ENCODE measurements at regions of chr17 and their contacts with region 1.

Region 1: GRCh38 chr17:73569762-73570319 is 74.4 kb downstream of the SDK2 start:
- DNase-seq: peak in 1 of 5 donors; percentile 54
- ATAC-seq: no peak
- H3K4me3 ChIP-seq: no peak overlapping the region
- H3K27ac ChIP-seq: no peak overlapping the region
- H3K4me1 ChIP-seq: peaks cover 0 to 8% (median 0%) of the 10 kb centered on the region in 12 donors
- H3K27me3 ChIP-seq: no peaks in the 10 kb centered on the region
- CTCF ChIP-seq: no peak
- POLR2A ChIP-seq: no peak

Region 2: DNA sequence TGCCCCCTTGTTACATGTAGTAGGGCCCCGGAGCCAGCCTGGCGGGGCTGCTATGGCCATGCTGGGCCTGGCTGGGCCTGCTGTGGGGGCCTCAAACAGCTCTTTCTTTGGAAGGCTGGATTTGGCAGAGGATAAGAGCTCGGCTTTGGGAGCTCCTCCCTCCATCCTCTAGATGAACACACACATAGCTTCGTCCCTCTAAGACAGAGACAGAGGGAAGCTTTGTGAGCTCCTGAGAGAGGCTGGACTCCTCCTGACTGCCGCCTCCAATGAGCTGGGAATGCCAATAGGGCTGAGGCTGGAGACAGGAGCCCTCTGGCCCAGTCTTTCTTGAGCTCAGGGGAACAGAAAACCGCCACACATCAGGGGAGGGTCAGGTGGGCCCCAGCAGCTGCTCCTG is 220.7 kb before region 1 on chr17:
- intact Hi-C with region 1: no loop called
- DNase-seq: no peak
- ATAC-seq: peak in 3 of 4 donors; percentile 8 to 41 (median 37)
- H3K4me3 ChIP-seq: no peak overlapping the region
- H3K27ac ChIP-seq: peak overlapping the region in 2 of 12 donors; percentile 5 to 87
- H3K4me1 ChIP-seq: peaks cover 0 to 7% (median 0%) of the 10 kb centered on the region in 12 donors
- H3K27me3 ChIP-seq: no peaks in the 10 kb centered on the region
- CTCF ChIP-seq: no peak
- POLR2A ChIP-seq: no peak

Region 3: DNA sequence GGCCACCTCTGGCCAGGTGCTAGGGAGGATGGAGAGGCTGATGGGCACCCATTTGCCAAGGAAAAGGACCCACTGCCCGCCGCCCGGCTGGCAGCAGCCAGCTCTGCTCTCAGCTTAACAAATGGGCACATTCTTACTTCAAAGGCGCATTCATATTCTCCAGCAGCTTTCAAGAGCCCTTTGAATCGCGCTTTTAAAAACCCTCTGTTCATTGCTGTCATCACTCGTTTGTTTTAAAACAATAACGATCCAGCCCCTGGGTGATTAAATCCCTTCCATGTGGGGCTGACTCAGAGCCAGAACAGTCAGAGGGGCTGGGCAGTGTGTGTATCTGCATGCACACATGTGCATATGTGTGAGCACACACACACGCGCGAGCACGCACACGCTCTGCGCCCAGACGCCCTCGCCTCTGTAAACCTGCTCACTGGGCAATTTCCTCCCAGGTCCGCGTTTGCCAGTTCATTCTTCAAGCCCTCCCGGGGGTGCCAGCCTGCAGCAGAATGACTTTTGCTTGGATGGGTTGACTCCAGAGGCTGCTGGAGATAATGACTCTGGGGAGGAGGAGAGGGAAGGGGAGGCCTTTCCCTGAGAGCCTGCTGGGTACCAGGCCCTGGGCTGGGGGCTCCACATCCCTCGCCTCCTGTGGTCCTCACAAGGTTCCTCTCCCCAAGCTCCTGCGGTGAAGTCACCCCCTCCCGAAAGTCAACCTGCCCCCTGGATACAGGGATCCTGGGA is 58.7 kb before region 1 on chr17:
- intact Hi-C with region 1: loop called in 1 of 10 experiments (anchors 2 kb)
- DNase-seq: no peak
- ATAC-seq: no peak
- H3K4me3 ChIP-seq: no peak overlapping the region
- H3K27ac ChIP-seq: no peak overlapping the region
- H3K4me1 ChIP-seq: no peaks in the 10 kb centered on the region
- H3K27me3 ChIP-seq: no peaks in the 10 kb centered on the region
- CTCF ChIP-seq: no peak
- POLR2A ChIP-seq: no peak

Measured in heart left ventricle (tissue), 16 donors.